H1 (cell line): ENCODE measurements at regions of chr7 and their contacts with region 1.

Region 1: GRCh38 chr7:2354186-2354938 is at the start of gene EIF3B:
- DNase-seq: peak; percentile 54 to 87
- H3K4me3 ChIP-seq: peak within 1 kb of the TSS; percentile 93 to 100 (median 96)
- H3K27ac ChIP-seq: peak within 1 kb of the TSS; percentile 100
- H3K4me1 ChIP-seq: peaks cover 0 to 1% (median 0%) of the 10 kb centered on the region in 4 experiments; a peak in 4 of 7 replicates
- H3K27me3 ChIP-seq: no peaks in the 10 kb centered on the region
- CTCF ChIP-seq: no peak
- EP300 ChIP-seq: peak in 1 of 2 experiments; percentile 98; a peak in 2 of 3 replicates
- POLR2A ChIP-seq: peak in 1 of 2 experiments; percentile 80
- RAD21 ChIP-seq: no peak
- total RNA-seq, gene EIF3B: 306 and 316 TPM in 2 replicates

Region 2: DNA sequence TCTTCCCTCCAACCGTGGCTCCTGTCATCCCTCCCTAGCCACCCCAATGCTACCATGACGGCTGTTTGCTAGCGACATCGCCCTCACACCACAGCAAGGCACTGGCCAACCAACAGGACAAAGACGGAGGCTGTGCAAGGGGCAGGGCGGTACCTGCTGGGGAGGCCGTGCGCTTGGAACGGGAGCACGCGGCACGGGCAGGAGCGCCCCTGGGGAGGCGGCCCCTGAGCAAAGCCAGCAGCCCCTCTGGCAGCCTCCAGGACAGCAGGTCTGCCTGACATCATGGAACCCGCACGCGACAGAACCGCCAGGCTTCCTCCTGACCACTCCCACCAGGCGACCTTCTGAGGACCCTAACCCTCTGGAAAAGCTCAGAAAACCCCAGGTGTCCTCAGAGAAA is 134.3 kb before region 1 on chr7:
- CTCF ChIA-PET with region 1: interaction called, 3 read pairs
- POLR2A ChIA-PET with region 1: interaction called, 11 read pairs
- DNase-seq: no peak
- H3K4me3 ChIP-seq: no peak overlapping the region
- H3K27ac ChIP-seq: no peak overlapping the region
- H3K4me1 ChIP-seq: no peaks in the 10 kb centered on the region
- H3K27me3 ChIP-seq: no peaks in the 10 kb centered on the region
- CTCF ChIP-seq: no peak
- EP300 ChIP-seq: no peak
- POLR2A ChIP-seq: no peak
- RAD21 ChIP-seq: no peak

Region 3: GRCh38 chr7:2241580-2242540 is 112.5 kb before region 1 on chr7 and contains the starts of genes MRM2 and NUDT1:
- CTCF ChIA-PET with region 1: interaction called, 16 read pairs
- POLR2A ChIA-PET with region 1: interaction called, 11 read pairs
- DNase-seq: peak in 1 of 2 experiments; percentile 92
- H3K4me3 ChIP-seq: peak within 1 kb of the TSS; percentile 84 to 100 (median 87)
- H3K27ac ChIP-seq: peak within 1 kb of the TSS; percentile 76
- H3K4me1 ChIP-seq: peaks cover 0 to 11% (median 4%) of the 10 kb centered on the region in 4 experiments; a peak in 4 of 7 replicates
- H3K27me3 ChIP-seq: no peaks in the 10 kb centered on the region; a peak in 1 of 7 replicates
- CTCF ChIP-seq: no peak
- EP300 ChIP-seq: no peak
- POLR2A ChIP-seq: peak in 1 of 2 experiments; percentile 90; a peak in 2 of 3 replicates
- RAD21 ChIP-seq: no peak
- total RNA-seq, gene MRM2: 38.6 and 38.7 TPM in 2 replicates
- total RNA-seq, gene NUDT1: 76.1 and 85.2 TPM in 2 replicates

Region 4: DNA sequence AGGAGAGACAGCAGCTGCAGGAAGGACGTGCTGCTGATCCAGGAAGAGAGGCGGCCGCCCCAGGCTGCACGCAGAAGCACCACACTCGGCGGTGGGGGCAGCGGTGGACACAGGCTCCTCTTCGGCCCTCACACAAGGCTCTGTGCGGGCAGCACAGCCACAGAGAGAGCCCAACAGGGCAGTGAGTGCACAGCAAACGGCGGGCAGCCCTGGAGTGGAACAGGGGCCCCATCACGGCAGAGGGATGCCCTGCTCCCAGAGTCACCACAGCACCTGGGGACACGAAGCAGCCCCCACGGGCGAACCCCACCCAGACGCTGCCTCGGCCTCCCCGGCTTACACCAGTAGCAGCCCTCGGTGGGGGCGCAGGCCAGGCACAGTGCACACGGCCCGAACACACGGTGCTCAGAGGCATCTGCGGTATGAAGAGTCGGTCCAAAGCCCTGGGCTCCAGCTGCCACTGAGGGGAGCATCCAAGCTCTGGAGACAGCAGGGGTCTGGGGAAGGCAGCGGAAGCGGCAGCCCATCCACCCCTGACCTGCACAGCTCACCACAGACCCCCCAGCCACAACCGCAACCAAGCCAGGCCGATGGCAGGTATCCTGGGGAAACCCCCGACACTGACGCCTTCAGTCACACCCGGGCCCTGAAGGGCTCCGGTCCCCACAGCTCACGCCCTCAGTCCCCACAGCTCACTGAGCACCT is 95.5 kb before region 1 on chr7:
- CTCF ChIA-PET with region 1: no interaction called
- POLR2A ChIA-PET with region 1: interaction called, 13 read pairs
- DNase-seq: no peak
- H3K4me3 ChIP-seq: no peak overlapping the region
- H3K27ac ChIP-seq: no peak overlapping the region
- H3K4me1 ChIP-seq: no peaks in the 10 kb centered on the region
- H3K27me3 ChIP-seq: no peaks in the 10 kb centered on the region
- CTCF ChIP-seq: no peak
- EP300 ChIP-seq: no peak
- POLR2A ChIP-seq: no peak
- RAD21 ChIP-seq: no peak

Region 5: DNA sequence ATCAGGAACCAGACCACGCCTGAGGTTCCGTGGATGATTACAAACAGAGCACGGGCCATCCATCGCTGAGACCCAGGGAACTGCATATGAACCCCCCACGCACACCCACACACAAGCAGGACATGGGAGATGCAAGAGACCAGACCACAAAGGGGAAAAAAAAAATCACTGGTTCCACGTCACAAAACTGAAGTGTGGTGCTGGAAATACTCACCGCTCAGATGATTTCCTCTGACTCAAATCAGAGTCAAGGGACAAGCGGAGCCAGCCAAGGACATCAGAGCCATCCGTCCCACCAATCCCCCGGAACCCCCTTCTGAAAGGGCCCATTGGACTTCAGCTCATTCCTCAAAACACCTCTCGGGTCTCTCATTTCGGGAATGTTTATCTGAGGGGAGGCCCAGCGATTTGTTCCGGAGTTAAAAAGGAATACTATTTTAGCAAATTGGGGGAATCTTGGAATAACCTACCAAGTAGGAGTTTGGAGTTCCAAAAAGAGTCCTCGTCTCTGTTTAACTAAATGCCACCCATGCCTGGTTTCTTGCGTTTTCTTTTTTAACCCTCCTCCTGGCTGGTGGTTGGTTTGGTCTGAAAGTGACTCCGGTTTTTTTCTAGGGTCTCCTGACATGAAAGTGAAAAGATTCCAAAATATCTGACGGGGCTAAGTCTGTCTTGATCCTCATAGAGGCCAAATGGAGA is 55.1 kb before region 1 on chr7:
- CTCF ChIA-PET with region 1: no interaction called
- POLR2A ChIA-PET with region 1: interaction called, 12 read pairs
- DNase-seq: no peak
- H3K4me3 ChIP-seq: no peak overlapping the region
- H3K27ac ChIP-seq: no peak overlapping the region
- H3K4me1 ChIP-seq: peaks cover 3 to 13% (median 7%) of the 10 kb centered on the region in 4 experiments; a peak in 6 of 7 replicates
- H3K27me3 ChIP-seq: no peaks in the 10 kb centered on the region
- CTCF ChIP-seq: no peak
- EP300 ChIP-seq: no peak
- POLR2A ChIP-seq: no peak
- RAD21 ChIP-seq: no peak

Region 6: GRCh38 chr7:2321020-2321419 is 33.3 kb before region 1 on chr7:
- CTCF ChIA-PET with region 1: interaction called, 3 read pairs
- POLR2A ChIA-PET with region 1: interaction called, 10 read pairs
- DNase-seq: no peak
- H3K4me3 ChIP-seq: no peak overlapping the region
- H3K27ac ChIP-seq: no peak overlapping the region
- H3K4me1 ChIP-seq: no peaks in the 10 kb centered on the region
- H3K27me3 ChIP-seq: no peaks in the 10 kb centered on the region
- CTCF ChIP-seq: peak in 2 of 3 experiments; percentile 24 to 30; a peak in 2 of 4 replicates
- EP300 ChIP-seq: no peak
- POLR2A ChIP-seq: no peak
- RAD21 ChIP-seq: peak; percentile 19 to 43; a peak in 1 of 4 replicates

Region 7: DNA sequence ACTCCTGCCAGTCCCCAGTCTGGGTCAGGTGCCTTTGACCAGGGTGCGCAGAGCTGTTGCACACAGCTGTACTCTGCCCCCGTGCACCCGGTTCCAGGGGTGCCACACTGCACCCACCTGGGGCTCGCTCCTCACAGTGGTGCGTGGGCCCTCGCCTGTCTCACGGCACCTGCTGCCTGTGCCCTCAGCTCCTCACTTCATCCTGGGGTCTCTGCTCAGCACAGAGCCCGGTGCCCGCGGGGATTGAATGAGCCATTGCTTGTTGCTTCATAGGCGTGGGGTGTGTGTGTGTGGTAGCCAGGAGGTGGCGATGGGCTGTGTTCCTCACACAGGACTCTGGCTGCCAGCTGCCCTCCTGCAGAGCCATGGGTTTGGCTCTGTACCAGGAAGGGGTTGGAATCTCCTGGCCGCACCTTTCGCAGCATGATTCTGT is 18.8 kb after region 1 on chr7:
- CTCF ChIA-PET with region 1: interaction called, 4 read pairs
- POLR2A ChIA-PET with region 1: interaction called, 69 read pairs
- DNase-seq: no peak
- H3K4me3 ChIP-seq: no peak overlapping the region
- H3K27ac ChIP-seq: no peak overlapping the region
- H3K4me1 ChIP-seq: no peaks in the 10 kb centered on the region
- H3K27me3 ChIP-seq: no peaks in the 10 kb centered on the region; a peak in 1 of 7 replicates
- CTCF ChIP-seq: peak in 1 of 3 experiments; percentile 6; a peak in 1 of 4 replicates
- EP300 ChIP-seq: no peak
- POLR2A ChIP-seq: peak in 1 of 2 experiments; percentile 8; a peak in 1 of 3 replicates
- RAD21 ChIP-seq: no peak

Region 8: DNA sequence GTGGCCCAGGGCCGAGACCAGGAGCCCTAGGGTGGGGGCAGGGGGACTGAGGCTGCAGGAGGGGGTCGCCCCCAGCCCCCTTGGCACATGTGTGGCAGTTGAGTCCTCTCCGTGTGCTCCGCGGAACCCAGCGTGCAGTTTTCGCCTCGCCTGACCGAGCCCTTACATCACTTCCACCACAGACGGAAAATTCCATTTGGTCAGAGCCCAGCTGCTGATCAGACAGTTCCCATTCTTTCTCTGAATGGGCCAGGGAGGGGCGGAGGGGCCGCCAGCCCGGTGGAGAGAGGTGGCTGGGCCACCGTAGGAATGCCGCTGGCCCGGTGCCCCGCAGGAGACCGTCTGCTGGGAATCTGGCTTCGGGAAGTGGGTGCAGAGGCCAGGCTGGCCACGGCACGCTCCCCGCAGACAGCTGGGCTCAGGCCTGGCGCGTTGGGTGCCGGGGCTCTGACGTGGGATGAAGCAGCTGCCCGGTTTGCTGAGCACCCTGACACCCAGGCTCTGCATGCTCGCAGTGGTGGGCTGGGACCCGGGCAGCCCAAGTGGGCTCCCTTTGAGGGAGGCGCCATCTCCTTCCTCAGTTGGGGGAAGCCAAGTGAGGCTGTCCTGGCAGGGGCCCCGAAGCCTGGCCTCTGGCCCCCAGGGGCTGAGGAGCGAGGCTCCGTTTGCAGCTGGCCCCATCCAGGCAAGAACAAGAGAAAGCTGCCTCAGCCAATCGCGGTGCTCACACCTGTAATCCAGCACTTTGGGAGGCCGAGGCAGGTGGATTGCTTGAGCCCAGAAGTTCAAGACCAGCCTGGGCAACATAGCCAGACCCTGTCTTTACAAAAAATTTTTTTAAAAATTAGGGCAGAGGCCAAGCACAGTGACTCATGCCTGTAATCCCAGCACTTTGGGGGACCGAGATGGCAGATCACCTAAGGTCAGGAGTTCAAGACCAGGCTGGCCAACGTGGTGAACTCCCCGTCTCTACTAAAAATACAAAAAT is 287.3 kb after region 1 on chr7:
- CTCF ChIA-PET with region 1: no interaction called
- POLR2A ChIA-PET with region 1: no interaction called
- DNase-seq: peak in 1 of 2 experiments; percentile 87
- H3K4me3 ChIP-seq: peak overlapping the region in 2 of 4 experiments; percentile 19 to 41; a peak in 4 of 8 replicates
- H3K27ac ChIP-seq: peak overlapping the region; percentile 68; the same call in 1 of the 2 replicates
- H3K4me1 ChIP-seq: peaks cover 3 to 46% (median 39%) of the 10 kb centered on the region in 4 experiments
- H3K27me3 ChIP-seq: no peaks in the 10 kb centered on the region
- CTCF ChIP-seq: peak in 1 of 3 experiments; percentile 9; a peak in 1 of 4 replicates
- EP300 ChIP-seq: peak in 1 of 2 experiments; percentile 63; a peak in 1 of 3 replicates
- POLR2A ChIP-seq: no peak; a peak in 1 of 3 replicates
- RAD21 ChIP-seq: no peak